ENCODE measurements at regions of chr14 and their contacts with region 1.

Region 1: GRCh38 chr14:37081202-37081601 is 91.2 kb downstream of the SLC25A21 start:
- DNase-seq: no peak

Region 2: DNA sequence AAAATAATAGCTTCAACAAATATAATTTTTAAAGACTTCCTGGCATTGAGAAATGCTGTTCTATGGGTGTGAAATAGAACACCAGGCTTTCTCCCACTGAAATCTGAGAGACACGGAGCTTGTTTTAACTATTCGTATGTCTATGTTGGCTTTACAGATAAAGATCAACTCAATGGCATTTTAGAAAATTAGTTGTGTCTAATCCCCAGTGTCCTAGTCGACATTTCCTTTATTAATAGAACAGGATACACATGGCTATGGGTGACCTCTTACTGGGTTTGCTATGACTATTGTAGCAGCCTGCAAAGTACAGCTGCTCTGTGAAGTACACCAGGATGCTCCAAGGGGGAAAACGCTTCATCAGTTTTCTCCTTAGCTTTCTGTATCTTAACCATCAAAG is 68.1 kb before region 1 on chr14:
- intact Hi-C with region 1: loop called in 1 of 2 experiments (anchors 2 kb)
- DNase-seq: no peak

Region 3: DNA sequence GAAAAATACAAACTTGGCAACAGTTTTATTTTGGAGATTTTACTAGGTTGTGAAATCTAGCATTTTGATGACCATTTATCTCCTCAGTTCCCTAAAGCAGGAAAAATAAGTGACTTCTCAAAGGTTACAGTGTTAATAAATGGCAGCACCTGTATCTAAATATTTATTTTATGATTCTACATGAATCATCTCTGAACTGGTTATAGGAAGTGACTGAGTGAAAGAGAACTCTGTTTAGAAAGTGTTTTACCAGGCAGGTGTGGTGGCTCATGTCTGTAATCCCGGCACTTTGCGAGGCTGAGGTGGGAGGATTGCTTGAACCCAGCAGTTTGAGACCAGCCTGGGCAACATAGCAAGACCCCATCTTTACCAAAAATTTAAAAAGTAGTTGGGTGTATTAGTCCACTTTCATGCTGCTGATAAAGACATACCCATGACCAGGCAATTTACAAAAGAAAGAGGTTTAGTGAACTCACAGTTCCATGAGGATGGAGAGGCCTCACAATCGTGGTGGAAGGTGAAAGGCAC is 142.8 kb after region 1 on chr14:
- intact Hi-C with region 1: no loop called
- DNase-seq: no peak

Region 4: DNA sequence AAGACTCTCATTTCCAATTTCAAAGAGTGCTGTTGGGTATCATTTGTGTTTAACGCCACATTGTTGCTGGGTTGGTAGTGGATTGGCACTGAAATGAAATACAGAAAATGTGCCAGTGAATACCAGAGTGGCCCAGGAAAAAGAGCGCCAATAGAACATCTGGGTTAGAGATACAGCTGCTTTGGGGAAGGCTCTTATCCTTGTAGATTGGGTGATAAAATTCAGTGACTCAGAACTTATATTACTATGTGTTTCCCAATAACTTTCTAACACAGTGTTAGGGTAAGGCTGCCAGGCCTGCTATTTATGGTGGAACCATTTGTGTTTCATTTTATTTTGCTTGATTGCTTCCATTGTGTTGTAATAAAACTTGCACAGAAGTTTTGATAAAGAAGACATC is 958.3 kb after region 1 on chr14:
- intact Hi-C with region 1: loop called in 1 of 2 experiments (anchors 5 kb)
- DNase-seq: no peak